ENCODE measurements at regions of chr1 and their contacts with region 1.

Region 1: DNA sequence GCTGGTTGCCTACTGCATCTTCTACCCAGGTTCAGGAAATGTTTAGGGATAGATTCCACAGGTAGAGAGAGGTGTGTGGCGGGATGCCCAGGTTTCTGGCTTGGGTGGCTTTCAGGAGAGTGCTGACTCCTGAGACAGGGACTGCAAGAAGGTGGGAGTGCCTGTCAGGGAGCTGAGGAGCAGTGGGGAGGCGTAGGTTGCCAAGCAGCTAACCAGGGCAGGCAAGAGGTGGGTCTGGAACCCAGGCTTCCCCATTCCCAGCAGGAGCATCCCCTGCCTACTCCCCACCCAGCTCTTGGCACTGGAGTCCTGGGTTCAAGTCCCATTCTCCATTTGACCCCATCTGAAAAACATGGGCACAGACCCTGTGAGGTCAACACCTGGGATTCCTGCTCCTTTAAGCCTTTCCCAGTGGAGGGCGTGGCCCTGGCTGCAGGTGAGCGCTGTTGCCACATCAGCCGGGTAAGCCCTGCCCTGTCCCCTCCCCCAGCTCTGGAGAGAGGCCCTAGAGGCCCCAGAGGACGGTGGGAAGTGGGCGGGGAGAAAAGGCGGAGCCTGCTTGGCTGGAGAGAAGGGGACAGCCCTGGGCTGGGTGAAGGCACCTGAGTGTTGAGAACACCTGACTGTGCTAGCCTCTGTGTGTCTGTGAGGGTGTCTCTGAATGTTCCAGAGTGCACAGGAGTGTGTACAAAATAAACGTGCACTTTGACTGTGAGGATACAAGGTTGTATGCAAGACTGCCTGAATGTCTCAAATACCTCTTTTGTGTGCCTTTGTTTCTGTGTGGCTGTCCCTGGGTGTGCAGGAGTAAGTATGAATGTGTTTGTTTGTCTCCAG is 14.0 kb upstream of the SYNC start:
- DNase-seq: peak; percentile 53
- H3K4me3 Mint-ChIP-seq: no peak overlapping the region
- H3K27ac Mint-ChIP-seq: no peak overlapping the region
- H3K4me1 Mint-ChIP-seq: peaks cover 4% of the 10 kb centered on the region
- H3K27me3 Mint-ChIP-seq: peaks cover 3% of the 10 kb centered on the region

Region 2: DNA sequence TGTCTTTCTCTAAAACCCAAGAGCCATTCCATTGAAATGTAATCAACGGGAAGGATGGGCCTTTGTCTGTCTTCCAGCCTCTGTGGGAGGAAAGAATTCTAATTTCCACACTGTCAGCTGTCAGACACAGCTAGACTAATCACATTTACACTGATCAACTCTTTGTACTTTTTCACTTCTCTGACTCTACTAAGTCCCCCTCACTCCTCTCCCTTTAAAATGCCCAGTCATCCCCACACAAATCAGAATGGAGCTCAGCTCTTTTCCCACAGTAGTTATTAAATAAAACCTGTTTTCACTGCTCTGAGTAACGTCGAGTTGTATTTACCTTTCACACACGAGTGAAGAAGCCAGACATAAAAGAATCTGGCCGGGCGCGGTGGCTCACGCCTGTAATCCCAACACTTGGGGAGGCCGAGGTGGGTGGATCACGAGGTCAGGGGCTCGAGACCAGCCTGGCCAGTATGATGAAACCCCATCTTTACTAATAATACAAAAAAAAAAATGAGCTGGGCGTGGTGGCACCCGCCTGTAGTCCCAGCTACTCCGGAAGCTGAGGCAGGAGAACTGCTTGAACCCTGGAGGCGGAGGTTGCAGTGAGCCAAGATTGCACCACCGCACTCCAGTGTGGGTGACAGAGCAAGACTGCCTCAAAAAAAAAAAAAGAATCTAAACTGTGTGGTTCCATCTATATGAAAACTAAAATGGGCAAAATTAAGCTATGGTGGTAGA is 79.5 kb before region 1 on chr1:
- intact Hi-C with region 1: no loop called
- DNase-seq: no peak
- H3K4me3 Mint-ChIP-seq: no peak overlapping the region
- H3K27ac Mint-ChIP-seq: peak overlapping the region; percentile 52
- H3K4me1 Mint-ChIP-seq: peaks cover 12% of the 10 kb centered on the region
- H3K27me3 Mint-ChIP-seq: no peaks in the 10 kb centered on the region

Region 3: GRCh38 chr1:32753532-32754312 is 37.2 kb after region 1 on chr1:
- intact Hi-C with region 1: loop called (anchors 5 kb)
- DNase-seq: peak; percentile 53
- H3K4me3 Mint-ChIP-seq: peak overlapping the region; percentile 55
- H3K27ac Mint-ChIP-seq: no peak overlapping the region
- H3K4me1 Mint-ChIP-seq: peaks cover 4% of the 10 kb centered on the region
- H3K27me3 Mint-ChIP-seq: peaks cover 35% of the 10 kb centered on the region

Region 4: DNA sequence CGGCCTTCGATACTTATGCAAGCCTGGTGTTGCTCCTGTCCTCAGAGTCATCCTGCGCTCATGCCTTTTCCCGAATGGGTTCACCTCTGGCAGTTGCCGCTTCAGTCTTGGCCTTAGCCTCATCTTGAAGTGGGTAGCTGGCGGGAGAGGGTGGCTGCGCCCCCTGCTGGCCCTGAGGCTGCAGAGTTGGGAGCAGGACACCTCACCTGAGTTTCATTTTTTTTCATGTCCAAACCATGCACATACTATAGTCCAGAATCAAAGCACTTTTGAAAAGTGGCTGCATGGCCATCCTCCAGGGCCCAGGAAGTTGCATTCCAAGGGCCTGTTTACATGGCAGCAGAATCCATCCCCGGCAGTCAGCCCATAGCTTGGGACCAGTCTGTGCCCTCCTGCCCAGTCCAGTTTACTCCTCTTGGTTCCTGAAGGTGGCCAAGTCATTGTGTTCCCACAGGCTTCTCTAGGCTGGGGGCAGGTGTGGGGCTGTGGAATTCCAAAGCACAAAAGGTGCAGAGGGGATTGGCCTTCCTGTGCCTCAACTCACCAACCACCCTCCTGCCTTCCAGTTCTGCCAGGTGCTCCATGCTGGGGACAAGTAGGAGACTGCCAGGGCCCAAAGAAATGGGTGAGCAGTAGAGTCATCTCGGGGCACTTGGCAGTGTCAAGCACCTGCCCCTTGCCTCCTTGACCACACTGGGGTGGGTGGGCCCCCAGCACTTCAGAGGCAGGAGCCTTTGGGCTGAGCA is 56.7 kb after region 1 on chr1:
- intact Hi-C with region 1: loop called (anchors 1 kb)
- DNase-seq: peak; percentile 63
- H3K4me3 Mint-ChIP-seq: no peak overlapping the region
- H3K27ac Mint-ChIP-seq: no peak overlapping the region
- H3K4me1 Mint-ChIP-seq: peaks cover 5% of the 10 kb centered on the region
- H3K27me3 Mint-ChIP-seq: no peaks in the 10 kb centered on the region

Region 5: DNA sequence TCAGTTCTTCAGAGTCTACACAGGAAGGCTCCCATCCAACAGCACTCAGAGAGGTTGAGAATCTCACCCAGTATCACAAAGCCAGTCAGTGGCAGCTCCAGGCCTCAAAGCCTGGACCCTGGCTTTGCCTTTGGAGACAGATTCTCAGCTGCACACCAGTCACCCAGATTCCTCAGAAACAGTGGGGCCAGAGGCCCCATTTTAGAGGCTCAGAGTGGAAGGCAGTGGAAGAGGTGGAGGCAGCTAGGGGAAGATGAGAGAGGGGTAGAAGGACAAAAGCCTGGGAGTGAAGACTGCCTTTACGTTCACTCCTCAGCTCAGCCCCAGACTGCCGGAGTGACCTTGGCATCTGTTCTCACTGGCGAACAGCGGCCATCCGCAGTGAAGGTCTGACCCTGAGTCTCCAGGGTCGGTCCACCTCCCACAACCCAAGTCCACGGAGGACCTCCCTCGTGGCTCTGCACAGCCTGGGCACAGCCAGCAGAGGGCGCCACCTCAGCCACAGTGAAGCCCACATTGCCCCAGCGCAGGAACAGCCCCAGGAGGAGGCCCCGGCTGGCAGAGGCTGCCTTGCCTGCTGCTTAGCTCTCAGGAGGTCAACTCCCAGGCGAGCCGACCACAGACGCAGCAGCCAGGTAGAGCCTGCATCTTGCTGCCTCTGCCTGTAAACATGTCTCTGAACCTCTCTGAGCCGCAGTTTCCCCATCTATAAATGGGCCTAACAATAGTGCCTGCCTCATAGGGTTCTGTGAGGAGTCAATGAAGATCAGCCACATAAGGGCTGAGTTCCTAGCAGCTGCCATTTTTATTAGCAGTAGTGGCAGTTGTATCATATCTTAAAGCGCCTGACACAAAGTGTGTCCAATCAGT is 160.0 kb after region 1 on chr1:
- intact Hi-C with region 1: loop called (anchors 2 kb)
- DNase-seq: peak; percentile 58
- H3K4me3 Mint-ChIP-seq: no peak overlapping the region
- H3K27ac Mint-ChIP-seq: no peak overlapping the region
- H3K4me1 Mint-ChIP-seq: peaks cover 4% of the 10 kb centered on the region
- H3K27me3 Mint-ChIP-seq: peaks cover 26% of the 10 kb centered on the region

Region 6: GRCh38 chr1:33025181-33025571 is 308.6 kb after region 1 on chr1:
- intact Hi-C with region 1: no loop called
- DNase-seq: no peak
- H3K4me3 Mint-ChIP-seq: no peak overlapping the region
- H3K27ac Mint-ChIP-seq: peak overlapping the region; percentile 59
- H3K4me1 Mint-ChIP-seq: peaks cover 51% of the 10 kb centered on the region
- H3K27me3 Mint-ChIP-seq: no peaks in the 10 kb centered on the region

Measured in activated T-helper 2 cell treated with anti-CD3 and anti-CD28 coated beads, Interferon-gamma antibody, Interleukin-2, Interleukin-4, amounts not matched to agents 10 μg/mL and 5 μg/mL and 100 μg/mL, durations not matched to agents 14 hours and 24 hours and 36 hours (primary cell).